Naive thymus-derived CD4-positive, alpha-beta T cell (primary cell): ENCODE measurements at regions of chr13 and their contacts with region 1.

Region 1: GRCh38 chr13:51452361-51453206 is at the start of gene INTS6:
- DNase-seq: peak; percentile 97 to 100 (median 99)
- ATAC-seq: peak; percentile 91
- H3K4me3 ChIP-seq: peak within 1 kb of the TSS; percentile 81
- H3K4me3 Mint-ChIP-seq: peak within 1 kb of the TSS; percentile 86 to 99 (median 94)
- H3K27ac ChIP-seq: peak within 1 kb of the TSS; percentile 99
- H3K27ac Mint-ChIP-seq: peak within 1 kb of the TSS; percentile 92 to 99 (median 96)
- H3K4me1 ChIP-seq: peaks cover 27 to 32% of the 10 kb centered on the region in 2 donors
- H3K4me1 Mint-ChIP-seq: peaks cover 19 to 66% (median 45%) of the 10 kb centered on the region in 7 donors
- H3K27me3 ChIP-seq: no peaks in the 10 kb centered on the region
- H3K27me3 Mint-ChIP-seq: no peaks in the 10 kb centered on the region
- total RNA-seq, gene INTS6: 60.9 to 67.0 (median 62.7) TPM

Region 2: DNA sequence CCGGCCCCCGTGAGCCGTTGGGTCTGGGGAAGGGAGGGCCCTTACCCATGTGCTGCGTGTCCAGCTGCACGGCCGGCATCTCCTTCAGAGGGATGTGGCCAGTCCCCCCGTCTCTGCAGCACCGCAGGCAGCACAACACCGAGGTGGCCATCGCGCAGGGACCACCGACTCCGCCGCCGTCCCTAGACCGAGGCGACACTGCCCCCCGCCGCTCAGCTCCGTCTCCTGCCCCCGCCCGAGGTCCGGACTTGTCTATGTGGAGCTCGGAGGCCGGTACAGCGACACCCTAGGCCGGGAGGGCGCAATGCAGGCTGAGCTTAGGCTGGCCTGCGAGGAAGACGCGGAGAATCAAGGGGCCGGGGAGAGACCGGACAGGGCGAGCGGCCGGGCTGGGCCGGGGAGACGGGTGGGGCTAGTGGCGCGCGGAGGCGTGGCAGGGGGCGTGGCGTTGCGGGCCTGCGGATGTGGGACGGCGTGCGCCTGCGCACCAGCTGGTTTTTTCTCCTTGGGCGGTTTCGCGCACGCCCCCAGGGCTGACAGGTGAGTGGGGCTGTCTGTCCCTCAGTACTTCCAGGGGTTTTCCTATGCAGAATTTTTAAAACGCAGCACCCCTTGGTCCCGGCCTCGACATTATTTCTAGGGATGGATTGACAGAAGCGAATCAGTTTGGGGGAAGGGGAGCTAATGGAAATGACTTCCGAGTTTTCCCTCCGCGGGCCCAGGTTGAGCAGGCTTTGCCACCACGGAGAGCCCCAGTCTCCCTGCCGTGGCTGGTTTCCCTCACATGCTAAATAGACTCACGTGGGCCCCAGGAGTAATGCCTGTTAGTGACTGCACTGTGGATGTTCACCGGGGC is 1516.3 kb before region 1 on chr13 and contains the start of gene SPRYD7:
- CTCF ChIA-PET with region 1: no interaction called
- POLR2A ChIA-PET with region 1: no interaction called
- intact Hi-C with region 1: loop called in 1 of 2 experiments (anchors 5 kb)
- DNase-seq: peak; percentile 82 to 99 (median 90)
- ATAC-seq: peak; percentile 98
- H3K4me3 ChIP-seq: peak within 1 kb of the TSS; percentile 99
- H3K4me3 Mint-ChIP-seq: peak within 1 kb of the TSS; percentile 86 to 99 (median 96)
- H3K27ac ChIP-seq: peak within 1 kb of the TSS; percentile 69
- H3K27ac Mint-ChIP-seq: peak within 1 kb of the TSS; percentile 74 to 95 (median 86)
- H3K4me1 ChIP-seq: peaks cover 10 to 14% of the 10 kb centered on the region in 2 donors
- H3K4me1 Mint-ChIP-seq: peaks cover 12 to 28% (median 15%) of the 10 kb centered on the region in 7 donors
- H3K27me3 ChIP-seq: no peaks in the 10 kb centered on the region
- H3K27me3 Mint-ChIP-seq: peaks cover 0 to 33% (median 0%) of the 10 kb centered on the region in 5 donors
- total RNA-seq, gene SPRYD7: 1.7 to 3.1 (median 2.3) TPM

Region 3: DNA sequence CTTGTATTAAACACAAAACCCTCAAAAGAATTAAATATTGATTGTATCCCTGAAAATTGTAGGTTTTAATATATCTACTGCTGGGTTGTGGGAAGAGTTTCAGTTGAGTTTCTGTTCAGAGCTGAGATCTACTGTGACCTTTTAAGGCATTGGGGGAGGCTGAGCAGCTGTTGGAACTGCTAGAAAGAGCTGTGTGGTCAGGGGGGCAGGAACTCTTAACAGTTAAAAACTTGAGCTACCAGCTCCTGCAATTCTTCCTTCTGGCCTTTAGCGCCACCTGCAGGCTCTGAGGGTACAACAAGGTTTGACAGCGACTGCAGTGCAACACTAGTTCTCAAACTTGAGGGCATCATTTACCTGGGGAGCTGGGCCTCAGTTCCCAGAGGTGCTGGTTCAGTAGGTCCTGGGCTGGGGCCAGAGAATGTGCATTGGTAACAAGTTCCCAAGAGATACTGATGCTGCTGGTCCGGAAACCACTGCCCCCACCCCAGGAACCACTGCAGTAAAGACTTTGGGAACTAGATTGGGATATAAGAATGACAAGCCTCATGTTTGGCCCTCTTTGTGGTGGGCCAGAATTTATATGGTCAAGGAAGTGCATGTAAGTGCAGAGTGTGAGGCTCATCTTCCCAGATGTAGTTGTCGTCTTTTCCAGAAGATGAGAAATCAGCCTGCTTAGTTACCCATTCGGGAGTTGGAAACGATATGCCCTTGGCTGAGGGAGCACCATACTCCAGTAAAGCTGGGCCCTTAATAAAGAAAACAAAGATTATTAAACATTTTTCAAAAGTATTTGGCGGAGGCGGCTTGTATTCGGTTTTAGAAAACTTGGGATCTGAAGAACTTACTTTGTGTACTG is 540.4 kb before region 1 on chr13:
- CTCF ChIA-PET with region 1: no interaction called
- POLR2A ChIA-PET with region 1: no interaction called
- intact Hi-C with region 1: loop called (anchors 5 kb)
- DNase-seq: peak; percentile 72 to 86 (median 82)
- ATAC-seq: peak; percentile 73
- H3K4me3 ChIP-seq: peak overlapping the region; percentile 86
- H3K4me3 Mint-ChIP-seq: peak overlapping the region; percentile 72 to 99 (median 93)
- H3K27ac ChIP-seq: peak overlapping the region; percentile 86
- H3K27ac Mint-ChIP-seq: peak overlapping the region; percentile 72 to 98 (median 92)
- H3K4me1 ChIP-seq: peaks cover 15 to 28% of the 10 kb centered on the region in 2 donors
- H3K4me1 Mint-ChIP-seq: peaks cover 34 to 70% (median 62%) of the 10 kb centered on the region in 7 donors
- H3K27me3 ChIP-seq: no peaks in the 10 kb centered on the region
- H3K27me3 Mint-ChIP-seq: no peaks in the 10 kb centered on the region

Region 4: DNA sequence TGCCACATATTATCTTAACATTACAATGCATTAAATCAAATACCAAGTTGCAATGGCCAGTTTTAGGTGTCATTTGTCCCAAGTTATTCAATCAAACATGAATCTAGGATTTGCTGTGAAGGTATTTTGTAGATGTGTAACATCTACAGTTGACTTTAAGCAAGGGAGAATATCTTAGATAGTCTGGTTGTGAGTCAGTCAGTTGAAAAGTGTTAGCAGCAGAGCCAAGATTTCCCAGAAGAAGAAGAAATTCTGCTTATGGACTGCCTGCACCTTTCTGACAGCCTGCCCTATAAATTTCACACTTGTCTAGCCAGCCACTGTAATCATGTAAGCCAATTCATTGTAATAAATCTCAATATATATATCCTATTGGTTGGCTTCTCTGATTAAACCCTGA is 41.6 kb after region 1 on chr13:
- CTCF ChIA-PET with region 1: no interaction called
- POLR2A ChIA-PET with region 1: no interaction called
- intact Hi-C with region 1: no loop called
- DNase-seq: no peak
- ATAC-seq: no peak
- H3K4me3 ChIP-seq: no peak overlapping the region
- H3K4me3 Mint-ChIP-seq: no peak overlapping the region
- H3K27ac ChIP-seq: no peak overlapping the region
- H3K27ac Mint-ChIP-seq: no peak overlapping the region
- H3K4me1 ChIP-seq: no peaks in the 10 kb centered on the region
- H3K4me1 Mint-ChIP-seq: no peaks in the 10 kb centered on the region
- H3K27me3 ChIP-seq: no peaks in the 10 kb centered on the region
- H3K27me3 Mint-ChIP-seq: peaks cover 0 to 36% (median 6%) of the 10 kb centered on the region in 5 donors

Region 5: GRCh38 chr13:51534041-51534817 is 81.6 kb after region 1 on chr13:
- CTCF ChIA-PET with region 1: no interaction called
- POLR2A ChIA-PET with region 1: interaction called, 28 read pairs
- intact Hi-C with region 1: loop called (anchors 5 kb)
- DNase-seq: peak in 6 of 9 donors; percentile 3 to 18 (median 10)
- ATAC-seq: peak; percentile 82
- H3K4me3 ChIP-seq: no peak overlapping the region
- H3K4me3 Mint-ChIP-seq: peak overlapping the region; percentile 38 to 79 (median 62)
- H3K27ac ChIP-seq: peak overlapping the region; percentile 40
- H3K27ac Mint-ChIP-seq: peak overlapping the region; percentile 41 to 90 (median 74)
- H3K4me1 ChIP-seq: peaks cover 22 to 24% of the 10 kb centered on the region in 2 donors
- H3K4me1 Mint-ChIP-seq: peaks cover 17 to 40% (median 25%) of the 10 kb centered on the region in 7 donors
- H3K27me3 ChIP-seq: no peaks in the 10 kb centered on the region
- H3K27me3 Mint-ChIP-seq: no peaks in the 10 kb centered on the region

Region 6: DNA sequence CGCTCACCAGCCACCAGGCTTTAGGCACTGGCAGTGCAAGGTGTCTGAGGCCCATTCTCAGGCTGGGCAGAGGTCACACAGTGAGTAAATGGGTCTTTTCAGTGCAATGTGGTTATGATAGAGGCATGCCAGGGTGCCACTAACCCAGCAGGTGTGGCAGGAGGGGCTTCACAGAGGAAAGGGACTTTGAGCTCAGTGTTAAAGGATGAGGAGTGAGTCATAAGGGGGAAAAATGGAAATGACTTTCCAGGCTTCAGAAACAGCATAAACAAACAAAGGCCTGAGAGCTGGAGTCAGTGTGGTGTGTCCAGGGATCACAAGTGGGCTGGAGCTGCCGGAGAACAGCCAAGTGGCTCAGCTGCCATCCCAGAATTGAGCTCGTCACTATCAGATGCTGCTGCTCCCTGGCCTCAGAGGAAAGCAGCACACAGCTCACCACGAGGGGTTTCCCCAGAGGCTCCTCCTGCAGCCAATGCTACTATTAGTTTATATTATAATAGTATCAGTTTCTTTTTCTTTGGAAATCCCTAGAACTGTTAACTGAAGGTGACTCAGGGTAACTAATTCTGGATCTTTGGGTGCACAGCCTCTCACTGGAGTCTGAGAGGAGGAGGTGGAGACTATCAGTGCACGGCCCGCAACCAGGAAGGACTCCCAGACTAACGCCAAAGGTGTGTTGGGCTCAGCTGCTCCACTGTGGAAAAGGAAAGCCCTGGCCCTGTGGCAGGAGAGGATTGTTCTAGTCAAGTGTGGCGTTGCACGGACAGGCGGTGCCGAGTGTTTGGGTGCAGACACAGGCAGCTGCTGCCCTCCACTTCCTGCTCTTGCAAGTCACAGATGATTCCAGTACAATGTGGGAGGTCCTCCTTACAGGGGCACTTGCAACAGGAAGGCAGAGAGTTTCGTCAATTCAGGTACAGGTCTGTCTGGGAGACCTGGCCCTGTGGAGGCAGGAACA is 311.9 kb after region 1 on chr13:
- CTCF ChIA-PET with region 1: no interaction called
- POLR2A ChIA-PET with region 1: interaction called, 26 read pairs
- intact Hi-C with region 1: loop called in 1 of 2 experiments (anchors 1 kb)
- DNase-seq: peak in 8 of 9 donors; percentile 19 to 62 (median 44)
- ATAC-seq: peak; percentile 88
- H3K4me3 ChIP-seq: peak overlapping the region; percentile 49
- H3K4me3 Mint-ChIP-seq: peak overlapping the region; percentile 74 to 90 (median 85)
- H3K27ac ChIP-seq: peak overlapping the region; percentile 68
- H3K27ac Mint-ChIP-seq: peak overlapping the region; percentile 88 to 95 (median 93)
- H3K4me1 ChIP-seq: peaks cover 6 to 15% of the 10 kb centered on the region in 2 donors
- H3K4me1 Mint-ChIP-seq: peaks cover 10 to 38% (median 29%) of the 10 kb centered on the region in 7 donors
- H3K27me3 ChIP-seq: no peaks in the 10 kb centered on the region
- H3K27me3 Mint-ChIP-seq: no peaks in the 10 kb centered on the region

Region 7: DNA sequence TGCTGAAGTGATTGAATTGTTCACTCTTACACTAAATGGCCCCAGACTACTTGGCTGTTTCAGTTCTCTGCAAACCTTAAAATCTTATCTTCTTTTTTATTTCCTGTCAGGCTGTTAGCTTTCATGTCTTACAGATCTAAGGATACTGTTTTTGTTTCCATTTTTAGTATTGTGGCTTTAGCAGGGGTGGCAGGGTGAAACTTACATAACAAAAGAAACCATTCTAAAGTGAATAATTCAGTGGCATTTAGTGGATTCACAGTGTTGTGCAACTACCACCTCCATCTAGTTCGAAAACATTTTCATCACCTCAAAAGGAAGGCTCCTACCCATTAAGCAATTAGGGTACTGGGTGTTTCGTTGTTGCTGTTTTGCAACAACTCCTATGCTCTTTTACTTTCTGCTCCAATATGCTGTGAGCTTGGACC is 372.6 kb after region 1 on chr13:
- CTCF ChIA-PET with region 1: no interaction called
- POLR2A ChIA-PET with region 1: interaction called, 64 read pairs
- intact Hi-C with region 1: loop called in 1 of 2 experiments (anchors 1 kb)
- DNase-seq: peak in 7 of 9 donors; percentile 62 to 90 (median 84)
- ATAC-seq: peak; percentile 81
- H3K4me3 ChIP-seq: peak overlapping the region; percentile 75
- H3K4me3 Mint-ChIP-seq: peak overlapping the region; percentile 62 to 100 (median 97)
- H3K27ac ChIP-seq: peak overlapping the region; percentile 85
- H3K27ac Mint-ChIP-seq: peak overlapping the region; percentile 86 to 99 (median 95)
- H3K4me1 ChIP-seq: peaks cover 61 to 78% of the 10 kb centered on the region in 2 donors
- H3K4me1 Mint-ChIP-seq: peaks cover 57 to 80% (median 63%) of the 10 kb centered on the region in 7 donors
- H3K27me3 ChIP-seq: no peaks in the 10 kb centered on the region
- H3K27me3 Mint-ChIP-seq: peaks cover 0 to 10% (median 0%) of the 10 kb centered on the region in 5 donors

Region 8: DNA sequence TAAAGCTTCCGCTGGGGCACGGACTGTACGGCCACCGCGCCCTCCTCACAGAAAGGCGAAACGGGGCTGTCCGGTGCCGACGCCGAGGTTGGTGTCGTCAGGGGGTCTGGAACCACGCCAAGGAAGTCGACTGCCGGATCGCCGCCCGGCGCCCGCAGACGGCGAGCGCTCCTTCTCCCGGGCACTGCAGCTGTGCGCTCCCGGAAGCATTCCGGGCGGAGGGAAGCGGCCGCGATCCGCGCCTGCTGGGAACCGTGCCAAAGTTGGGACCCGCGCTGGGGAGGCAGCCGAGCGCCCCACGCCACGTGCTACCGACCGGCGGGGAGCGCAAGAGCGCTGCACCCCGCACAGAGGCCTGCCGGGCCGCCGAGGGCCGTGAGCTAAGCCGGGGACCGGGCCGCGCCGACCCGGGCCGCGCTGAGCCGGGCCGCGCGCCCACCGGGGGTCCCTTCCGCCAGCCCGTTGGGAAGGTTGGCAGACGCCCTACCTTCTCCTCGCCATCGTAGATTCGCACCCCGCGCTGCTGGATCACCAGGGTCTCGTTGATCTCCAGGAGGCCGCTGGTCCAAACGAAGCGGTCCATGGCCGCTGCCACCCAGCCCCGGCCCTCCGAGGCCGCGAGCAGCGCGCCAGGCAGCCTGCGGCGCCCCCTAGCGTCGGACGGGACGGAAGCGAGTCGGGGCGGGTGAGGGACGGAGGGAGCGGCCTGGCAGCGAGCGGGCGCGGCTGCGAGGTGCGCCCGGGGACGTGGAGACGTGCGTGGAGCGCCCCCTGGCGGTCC is 997.6 kb after region 1 on chr13 and contains the start of gene VPS36:
- CTCF ChIA-PET with region 1: no interaction called
- POLR2A ChIA-PET with region 1: interaction called, 3 read pairs
- intact Hi-C with region 1: loop called (anchors 1 kb)
- DNase-seq: peak; percentile 85 to 99 (median 95)
- ATAC-seq: peak; percentile 85
- H3K4me3 ChIP-seq: peak within 1 kb of the TSS; percentile 92
- H3K4me3 Mint-ChIP-seq: peak within 1 kb of the TSS; percentile 80 to 98 (median 94)
- H3K27ac ChIP-seq: peak within 1 kb of the TSS; percentile 88
- H3K27ac Mint-ChIP-seq: peak within 1 kb of the TSS; percentile 58 to 96 (median 90)
- H3K4me1 ChIP-seq: peaks cover 26 to 27% of the 10 kb centered on the region in 2 donors
- H3K4me1 Mint-ChIP-seq: peaks cover 17 to 52% (median 45%) of the 10 kb centered on the region in 7 donors
- H3K27me3 ChIP-seq: no peaks in the 10 kb centered on the region
- H3K27me3 Mint-ChIP-seq: peaks cover 0 to 3% (median 0%) of the 10 kb centered on the region in 5 donors
- total RNA-seq, gene VPS36: 40.4 to 53.7 (median 49.5) TPM